Esophagus muscularis mucosa (tissue), 4 donors: ENCODE measurements at regions of chr11 and their contacts with region 1.

Region 1: DNA sequence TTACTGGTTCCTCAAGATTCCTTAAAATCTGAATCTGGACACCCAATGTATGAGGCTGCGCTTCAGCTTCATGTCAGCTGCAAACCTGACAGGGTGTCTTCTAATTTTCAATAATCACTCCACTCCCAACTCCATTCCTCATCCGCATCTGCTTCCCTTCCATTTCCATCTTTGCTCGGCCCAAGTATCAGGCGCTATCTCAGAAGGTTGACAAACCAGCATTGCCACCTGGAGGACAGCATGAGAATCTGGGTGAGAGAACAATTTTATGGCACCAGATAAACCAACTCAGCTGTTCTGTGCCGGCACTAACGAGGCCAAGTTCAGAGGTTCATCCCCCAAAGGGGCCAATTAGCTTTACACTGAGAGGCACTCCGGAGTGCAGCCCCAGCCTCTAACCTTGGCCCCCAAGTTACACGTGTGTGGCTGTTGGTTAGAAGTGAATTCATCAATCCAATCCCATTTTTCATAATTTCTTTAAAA is 79.1 kb upstream of the LMO2 start:
- DNase-seq: no peak
- H3K4me3 ChIP-seq: no peak overlapping the region
- H3K27ac ChIP-seq: no peak overlapping the region
- H3K4me1 ChIP-seq: no peaks in the 10 kb centered on the region
- H3K27me3 ChIP-seq: no peaks in the 10 kb centered on the region
- CTCF ChIP-seq: peak; percentile 35 to 56 (median 45)
- EP300 ChIP-seq: no peak
- POLR2A ChIP-seq: no peak

Region 2: DNA sequence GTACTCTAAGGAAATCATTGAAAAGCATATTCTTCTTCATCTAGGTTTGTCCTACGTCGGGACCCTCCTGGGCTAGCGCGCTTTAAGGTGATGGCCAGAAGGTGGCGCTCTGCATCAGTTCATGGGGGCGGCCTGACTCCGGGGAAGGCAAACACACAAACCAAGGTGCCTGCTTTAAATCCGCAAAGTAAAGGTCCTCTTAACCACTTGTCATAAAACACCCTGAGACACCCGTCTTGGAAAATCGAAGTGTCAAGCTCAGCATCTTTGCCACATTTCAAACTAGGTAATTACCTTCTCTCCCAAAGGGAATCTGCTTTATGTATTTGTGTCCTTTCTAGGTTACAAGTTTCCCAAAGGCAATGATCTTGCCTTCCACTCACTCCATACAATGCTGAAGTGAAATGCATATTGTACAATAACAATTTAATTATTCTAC is 113.1 kb before region 1 on chr11:
- intact Hi-C with region 1: loop called (anchors 5 kb)
- DNase-seq: peak; percentile 94
- H3K4me3 ChIP-seq: no peak overlapping the region
- H3K27ac ChIP-seq: no peak overlapping the region
- H3K4me1 ChIP-seq: peaks cover 0 to 14% (median 9%) of the 10 kb centered on the region in 4 donors
- H3K27me3 ChIP-seq: peaks cover 0 to 20% (median 0%) of the 10 kb centered on the region in 4 donors
- CTCF ChIP-seq: peak; percentile 69 to 81 (median 72)
- EP300 ChIP-seq: no peak
- POLR2A ChIP-seq: no peak